ENCODE measurements at regions of chr11 and their contacts with region 1.

Region 1: DNA sequence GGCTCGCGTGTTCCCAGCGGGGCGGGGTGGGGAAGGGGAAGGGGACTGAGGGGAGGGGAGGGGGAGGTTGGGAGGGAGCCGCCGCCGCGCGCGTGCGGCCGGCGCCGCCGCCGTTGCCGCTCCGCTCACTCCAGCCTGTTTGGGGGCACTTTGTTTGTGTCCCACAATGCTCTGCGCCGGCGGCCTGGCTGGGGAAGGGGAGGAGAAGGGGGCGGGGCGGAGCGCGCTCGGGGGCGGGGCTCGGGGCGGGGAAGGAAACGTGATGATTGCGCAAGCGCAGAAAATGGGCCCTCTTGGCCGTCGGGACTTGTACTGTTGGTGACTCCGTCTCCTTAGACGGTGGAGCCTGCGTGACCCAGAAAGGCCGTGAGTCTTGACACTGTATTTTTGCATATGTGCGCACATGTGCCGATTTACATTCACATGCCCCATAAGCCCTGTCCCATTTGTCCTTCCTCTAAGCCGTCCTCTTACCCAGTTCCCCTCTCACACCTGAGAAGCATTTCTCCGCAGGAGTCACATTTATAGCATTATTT is at the start of gene ZBTB44:
- DNase-seq: peak; percentile 74
- ATAC-seq: peak; percentile 86
- H3K4me3 ChIP-seq: peak within 1 kb of the TSS; percentile 75
- H3K27ac ChIP-seq: peak within 1 kb of the TSS; percentile 78
- H3K4me1 ChIP-seq: peaks cover 7% of the 10 kb centered on the region; the same call in 1 of the 2 replicates
- H3K27me3 ChIP-seq: no peaks in the 10 kb centered on the region
- CTCF ChIP-seq: no peak
- EP300 ChIP-seq: no peak
- POLR2A ChIP-seq: peak; percentile 64
- RAD21 ChIP-seq: no peak
- polyA plus RNA-seq, gene ZBTB44: 3.4 to 5.9 TPM

Region 2: GRCh38 chr11:129992161-129992944 is 322.5 kb before region 1 on chr11:
- CTCF ChIA-PET with region 1: no interaction called
- POLR2A ChIA-PET with region 1: no interaction called
- RAD21 ChIA-PET with region 1: no interaction called
- SMC1A ChIA-PET with region 1: no interaction called
- in situ Hi-C with region 1: no loop called
- intact Hi-C with region 1: no loop called
- DNase-seq: no peak
- ATAC-seq: peak; percentile 71
- H3K4me3 ChIP-seq: no peak overlapping the region
- H3K27ac ChIP-seq: no peak overlapping the region
- H3K4me1 ChIP-seq: no peaks in the 10 kb centered on the region
- H3K27me3 ChIP-seq: no peaks in the 10 kb centered on the region
- CTCF ChIP-seq: peak; percentile 41 to 44 (median 42); a peak in 5 of 6 replicates
- EP300 ChIP-seq: no peak
- POLR2A ChIP-seq: no peak
- RAD21 ChIP-seq: peak; percentile 48

Region 3: GRCh38 chr11:130278151-130278550 is 36.7 kb before region 1 on chr11:
- CTCF ChIA-PET with region 1: interaction called, 6 read pairs
- POLR2A ChIA-PET with region 1: no interaction called
- RAD21 ChIA-PET with region 1: interaction called, 5 read pairs
- SMC1A ChIA-PET with region 1: interaction called, 7 read pairs
- in situ Hi-C with region 1: no loop called
- intact Hi-C with region 1: loop called (anchors 5 kb)
- DNase-seq: peak; percentile 48
- ATAC-seq: peak; percentile 97
- H3K4me3 ChIP-seq: no peak overlapping the region
- H3K27ac ChIP-seq: no peak overlapping the region; the same call in 1 of the 2 replicates
- H3K4me1 ChIP-seq: peaks cover 8% of the 10 kb centered on the region
- H3K27me3 ChIP-seq: no peaks in the 10 kb centered on the region
- CTCF ChIP-seq: no peak
- EP300 ChIP-seq: 0 out of 4 replicates have a peak, but pooled peaks have one; percentile 25 to 28
- POLR2A ChIP-seq: no peak
- RAD21 ChIP-seq: no peak